ENCODE measurements at regions of chr9 and their contacts with region 1.

Region 1: DNA sequence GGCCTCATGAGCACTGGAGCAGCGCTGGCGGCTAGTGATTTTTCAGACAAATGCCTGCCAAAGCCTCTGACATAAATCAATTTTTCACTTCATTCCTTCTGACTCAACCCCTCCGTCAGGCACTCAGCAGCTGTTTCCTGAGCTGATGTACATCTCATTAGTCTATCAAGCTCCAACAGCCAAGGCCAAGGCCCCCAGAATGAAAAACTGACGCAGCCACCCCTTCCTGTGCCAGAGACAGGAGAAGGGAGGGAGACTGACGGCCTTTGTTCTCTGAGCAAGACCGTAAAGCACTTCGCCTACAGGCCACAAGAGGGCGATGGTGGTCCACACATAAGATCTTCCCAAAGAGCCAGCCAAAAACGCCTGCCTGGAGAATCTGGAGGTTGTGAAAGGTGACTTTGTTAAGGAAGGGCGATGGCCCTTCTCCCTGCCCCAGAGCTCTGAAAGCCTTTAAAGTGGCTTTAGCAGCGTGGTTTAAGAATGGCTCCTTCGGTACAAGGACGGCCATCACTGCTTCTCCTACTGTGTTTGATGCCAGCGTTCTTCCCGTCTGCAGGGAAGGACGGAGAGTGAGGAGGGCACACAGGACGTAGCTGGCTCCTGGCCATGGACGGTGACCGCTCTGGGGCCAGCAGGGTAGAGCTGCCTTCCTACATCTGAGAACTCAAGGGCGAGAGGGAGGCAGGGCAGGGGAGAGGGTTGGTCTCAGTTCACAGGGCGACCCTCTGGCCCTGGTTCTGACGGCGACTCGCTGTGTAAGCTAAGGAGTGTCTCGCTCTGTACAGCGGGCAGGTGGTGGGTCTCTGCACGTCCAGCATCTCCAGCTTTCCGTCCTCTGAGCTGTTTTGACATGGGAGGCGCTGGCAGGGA is 37.0 kb downstream of the ALG2 start:
- DNase-seq: peak; percentile 92
- H3K4me3 Mint-ChIP-seq: no peak overlapping the region
- H3K27ac Mint-ChIP-seq: peak overlapping the region; percentile 56
- H3K4me1 Mint-ChIP-seq: peaks cover 43% of the 10 kb centered on the region
- H3K27me3 Mint-ChIP-seq: peaks cover 15% of the 10 kb centered on the region

Region 2: DNA sequence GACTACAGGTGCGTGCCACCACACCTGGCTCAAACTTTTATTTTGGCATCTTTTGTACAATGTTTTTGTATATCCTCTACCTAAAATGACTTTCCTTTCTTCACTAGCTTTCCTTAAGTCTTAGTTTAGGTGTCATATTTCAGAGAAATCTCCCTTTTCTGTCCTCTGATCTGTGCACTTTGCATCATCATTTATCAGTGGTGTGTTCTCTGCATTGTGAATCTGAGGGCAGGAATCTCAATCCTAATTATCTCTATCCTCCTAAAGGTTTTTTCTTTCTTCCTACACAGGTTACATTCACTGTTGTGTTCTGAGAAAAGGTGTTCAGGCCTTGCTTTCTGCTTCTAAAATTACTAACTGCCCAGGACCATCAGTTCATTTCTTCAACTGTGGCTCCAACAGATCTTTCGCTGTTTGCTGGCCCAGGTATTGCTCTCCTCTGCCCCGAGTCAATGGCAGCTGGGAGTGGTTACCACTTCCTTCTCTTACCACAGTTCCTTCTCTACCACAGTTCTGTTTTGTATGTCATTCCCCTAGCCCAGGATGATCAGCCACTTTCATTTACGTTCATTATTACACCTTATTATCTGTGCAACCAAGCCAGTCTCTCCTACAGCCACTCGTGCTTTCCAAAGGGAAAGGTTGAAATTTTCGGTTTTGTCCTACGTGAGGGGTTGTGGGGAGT is 65.8 kb before region 1 on chr9:
- intact Hi-C with region 1: no loop called
- DNase-seq: peak; percentile 87
- H3K4me3 Mint-ChIP-seq: peak overlapping the region; percentile 81
- H3K27ac Mint-ChIP-seq: peak overlapping the region; percentile 90
- H3K4me1 Mint-ChIP-seq: peaks cover 57% of the 10 kb centered on the region
- H3K27me3 Mint-ChIP-seq: no peaks in the 10 kb centered on the region

Region 3: GRCh38 chr9:99169982-99170761 is 14.5 kb before region 1 on chr9:
- intact Hi-C with region 1: loop called (anchors 1 kb)
- DNase-seq: no peak
- H3K4me3 Mint-ChIP-seq: no peak overlapping the region
- H3K27ac Mint-ChIP-seq: no peak overlapping the region
- H3K4me1 Mint-ChIP-seq: peaks cover 29% of the 10 kb centered on the region
- H3K27me3 Mint-ChIP-seq: peaks cover 11% of the 10 kb centered on the region

Region 4: GRCh38 chr9:99253772-99254431 is 69.2 kb after region 1 on chr9:
- intact Hi-C with region 1: loop called (anchors 1 kb)
- DNase-seq: peak; percentile 93
- H3K4me3 Mint-ChIP-seq: peak overlapping the region; percentile 70
- H3K27ac Mint-ChIP-seq: peak overlapping the region; percentile 97
- H3K4me1 Mint-ChIP-seq: peaks cover 50% of the 10 kb centered on the region
- H3K27me3 Mint-ChIP-seq: no peaks in the 10 kb centered on the region

Region 5: DNA sequence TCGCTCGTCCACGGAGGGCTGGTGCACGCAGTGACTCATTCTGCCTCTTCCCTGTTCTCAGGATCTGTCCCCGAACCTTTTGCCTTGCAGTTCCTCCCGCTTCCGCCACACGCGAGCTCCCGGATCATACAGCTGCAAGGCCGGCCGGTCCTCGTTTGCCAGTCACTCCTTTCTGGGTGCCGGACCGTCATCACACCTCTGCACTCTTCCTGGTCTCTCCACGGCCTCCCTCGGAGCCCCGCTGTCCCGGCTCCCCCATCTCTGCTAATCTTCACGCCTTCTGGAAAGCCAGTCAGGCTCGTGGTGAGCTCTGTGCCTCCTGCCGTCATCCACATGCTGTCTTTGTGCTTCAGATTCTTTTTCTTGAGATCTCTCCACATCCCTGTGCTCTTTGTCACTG is 813.6 kb after region 1 on chr9:
- intact Hi-C with region 1: no loop called
- DNase-seq: no peak
- H3K4me3 Mint-ChIP-seq: no peak overlapping the region
- H3K27ac Mint-ChIP-seq: no peak overlapping the region
- H3K4me1 Mint-ChIP-seq: no peaks in the 10 kb centered on the region
- H3K27me3 Mint-ChIP-seq: no peaks in the 10 kb centered on the region

Region 6: DNA sequence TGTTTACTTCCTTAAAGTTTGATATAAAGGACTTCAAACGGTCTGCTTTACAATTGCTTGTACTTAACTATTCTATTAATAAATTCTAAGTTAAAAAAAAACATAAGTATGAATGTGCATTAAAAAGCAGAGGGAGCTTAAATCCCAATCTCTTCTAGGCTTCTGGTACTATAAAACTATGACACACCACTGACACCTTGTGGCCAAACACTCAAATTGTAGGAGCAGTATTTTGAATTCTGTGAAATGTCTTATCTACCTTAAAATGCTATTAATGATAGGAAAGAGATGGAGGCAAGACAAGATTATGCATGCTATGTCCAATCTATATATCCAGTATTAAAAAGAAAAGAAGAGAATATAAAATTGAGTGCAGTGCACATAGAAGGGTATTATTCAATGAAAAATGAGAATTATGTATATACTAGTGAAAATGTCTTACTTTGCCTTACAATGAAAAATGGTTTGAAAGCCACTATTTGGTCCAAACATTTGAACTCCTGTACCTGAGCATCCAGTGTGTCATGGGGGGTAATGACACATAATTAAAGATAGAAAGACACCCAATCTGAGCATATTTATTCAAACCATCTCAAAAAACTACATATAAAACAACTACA is 826.5 kb after region 1 on chr9:
- intact Hi-C with region 1: loop called (anchors 2 kb)
- DNase-seq: peak; percentile 82
- H3K4me3 Mint-ChIP-seq: no peak overlapping the region
- H3K27ac Mint-ChIP-seq: no peak overlapping the region
- H3K4me1 Mint-ChIP-seq: no peaks in the 10 kb centered on the region
- H3K27me3 Mint-ChIP-seq: no peaks in the 10 kb centered on the region

Region 7: GRCh38 chr9:100322954-100323536 is 1138.3 kb after region 1 on chr9:
- intact Hi-C with region 1: loop called (anchors 5 kb)
- DNase-seq: peak; percentile 67
- H3K4me3 Mint-ChIP-seq: no peak overlapping the region
- H3K27ac Mint-ChIP-seq: no peak overlapping the region
- H3K4me1 Mint-ChIP-seq: peaks cover 2% of the 10 kb centered on the region
- H3K27me3 Mint-ChIP-seq: no peaks in the 10 kb centered on the region